Gastrocnemius medialis (tissue), 4 donors: ENCODE measurements at regions of chr12 and their contacts with region 1.

Region 1: GRCh38 chr12:121626087-121626852 is at the start of gene ORAI1:
- DNase-seq: peak; percentile 94 to 96
- ATAC-seq: peak; percentile 83 to 85
- H3K4me3 ChIP-seq: peak within 1 kb of the TSS; percentile 72 to 86 (median 80)
- H3K27ac ChIP-seq: peak within 1 kb of the TSS; percentile 93 to 96 (median 96)
- H3K4me1 ChIP-seq: peaks cover 41 to 52% of the 10 kb centered on the region in 2 donors
- H3K27me3 ChIP-seq: no peaks in the 10 kb centered on the region
- CTCF ChIP-seq: peak in 4 of 5 experiments; percentile 34 to 49 (median 43)
- POLR2A ChIP-seq: peak; percentile 97
- total RNA-seq, gene ORAI1: 9.9 to 29.0 (median 16.4) TPM

Region 2: DNA sequence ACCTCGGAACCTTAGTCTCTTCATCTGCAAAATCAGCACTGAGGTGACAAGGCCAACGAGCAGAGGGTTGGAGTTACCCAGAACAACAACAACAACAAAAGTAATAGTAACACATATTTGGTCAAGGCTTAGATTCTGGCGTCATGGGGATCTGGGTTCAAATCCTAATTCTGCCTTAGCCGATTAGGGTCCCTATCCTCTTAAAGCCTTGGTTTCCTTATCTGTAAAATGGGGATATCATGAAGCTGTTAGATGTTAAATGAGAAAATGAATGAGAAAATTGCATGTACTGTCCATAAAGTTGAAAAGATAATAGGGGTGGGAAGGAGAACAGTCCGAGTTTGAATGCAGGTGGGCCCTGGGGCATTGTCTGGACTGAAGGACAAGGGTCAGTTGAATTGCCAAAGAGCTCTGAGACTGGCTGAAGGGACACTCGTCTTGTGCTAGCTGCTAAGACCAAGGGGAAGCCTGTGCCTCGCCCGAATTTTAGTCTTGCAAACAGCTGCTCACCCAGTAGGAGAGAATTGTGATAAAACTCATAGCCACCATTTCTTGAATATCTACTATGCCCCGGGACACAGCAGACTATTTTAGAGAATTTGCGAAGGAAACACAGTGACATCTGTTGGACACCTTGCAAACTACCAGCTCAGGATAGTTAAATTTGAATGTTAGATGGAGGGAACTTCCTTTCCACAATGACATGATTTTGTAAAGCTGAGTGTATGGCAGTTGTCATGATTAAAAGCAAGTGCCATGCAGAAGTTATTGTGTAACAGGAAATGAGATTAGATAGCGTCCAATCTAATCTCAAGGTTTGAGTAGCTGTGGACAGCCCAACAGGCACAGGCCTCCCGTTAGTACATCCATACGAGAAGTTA is 654.7 kb before region 1 on chr12:
- in situ Hi-C with region 1: no loop called
- intact Hi-C with region 1: no loop called
- DNase-seq: no peak
- ATAC-seq: peak; percentile 68 to 95
- H3K4me3 ChIP-seq: no peak overlapping the region
- H3K27ac ChIP-seq: no peak overlapping the region
- H3K4me1 ChIP-seq: no peaks in the 10 kb centered on the region
- H3K27me3 ChIP-seq: no peaks in the 10 kb centered on the region
- CTCF ChIP-seq: peak; percentile 65 to 75 (median 68)
- POLR2A ChIP-seq: no peak

Region 3: DNA sequence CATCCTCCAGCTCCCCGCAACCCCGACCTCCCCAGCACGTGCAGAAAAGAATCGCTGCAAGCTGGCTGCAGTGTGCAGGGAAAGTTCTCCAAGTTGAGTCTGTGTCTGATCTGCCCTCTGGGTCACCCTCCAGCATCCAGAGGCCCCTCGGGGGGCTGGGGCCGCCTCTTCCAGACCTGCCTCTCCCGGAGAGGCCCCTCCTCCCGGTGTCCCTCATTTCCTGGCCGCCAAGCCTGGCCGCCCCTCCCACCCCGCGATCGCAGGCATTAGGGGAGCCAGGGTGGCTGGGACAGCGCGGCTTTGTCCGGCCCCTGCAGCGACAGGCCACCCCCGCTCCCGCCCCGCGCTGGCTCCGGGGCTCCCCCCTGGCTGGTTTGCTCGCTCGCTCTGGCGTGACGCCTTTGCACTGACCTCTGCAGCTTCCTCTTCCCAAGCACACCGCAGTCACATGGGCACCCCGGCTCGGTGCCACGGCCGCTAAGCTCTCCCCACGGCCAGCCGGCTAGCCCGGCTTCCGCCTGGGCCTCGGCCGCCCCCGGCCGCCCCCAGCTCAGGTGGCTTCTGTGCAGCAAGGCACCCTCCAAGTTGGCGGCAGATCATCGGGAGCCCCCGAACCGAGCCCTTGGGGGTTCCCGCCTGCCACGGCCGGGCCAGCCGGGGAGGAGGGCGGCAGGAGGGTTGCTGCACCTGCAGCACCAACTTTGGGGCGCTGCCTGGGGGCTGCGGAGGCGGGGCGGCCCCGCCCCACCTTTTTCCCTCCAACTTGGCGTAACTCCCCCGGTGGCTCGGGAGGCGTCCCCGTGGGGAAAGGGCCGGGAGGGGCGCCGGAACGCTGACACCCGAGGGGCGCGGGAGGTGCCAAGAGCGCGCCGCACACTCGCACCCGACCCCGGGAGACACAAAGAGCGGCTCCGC is 89.1 kb before region 1 on chr12:
- in situ Hi-C with region 1: no loop called
- intact Hi-C with region 1: loop called (anchors 5 kb)
- DNase-seq: peak; percentile 81 to 91
- ATAC-seq: peak; percentile 81
- H3K4me3 ChIP-seq: peak overlapping the region; percentile 68 to 87 (median 82)
- H3K27ac ChIP-seq: peak overlapping the region; percentile 91 to 97 (median 94)
- H3K4me1 ChIP-seq: peaks cover 22 to 23% of the 10 kb centered on the region in 2 donors
- H3K27me3 ChIP-seq: no peaks in the 10 kb centered on the region
- CTCF ChIP-seq: no peak
- POLR2A ChIP-seq: peak; percentile 59 to 75

Region 4: DNA sequence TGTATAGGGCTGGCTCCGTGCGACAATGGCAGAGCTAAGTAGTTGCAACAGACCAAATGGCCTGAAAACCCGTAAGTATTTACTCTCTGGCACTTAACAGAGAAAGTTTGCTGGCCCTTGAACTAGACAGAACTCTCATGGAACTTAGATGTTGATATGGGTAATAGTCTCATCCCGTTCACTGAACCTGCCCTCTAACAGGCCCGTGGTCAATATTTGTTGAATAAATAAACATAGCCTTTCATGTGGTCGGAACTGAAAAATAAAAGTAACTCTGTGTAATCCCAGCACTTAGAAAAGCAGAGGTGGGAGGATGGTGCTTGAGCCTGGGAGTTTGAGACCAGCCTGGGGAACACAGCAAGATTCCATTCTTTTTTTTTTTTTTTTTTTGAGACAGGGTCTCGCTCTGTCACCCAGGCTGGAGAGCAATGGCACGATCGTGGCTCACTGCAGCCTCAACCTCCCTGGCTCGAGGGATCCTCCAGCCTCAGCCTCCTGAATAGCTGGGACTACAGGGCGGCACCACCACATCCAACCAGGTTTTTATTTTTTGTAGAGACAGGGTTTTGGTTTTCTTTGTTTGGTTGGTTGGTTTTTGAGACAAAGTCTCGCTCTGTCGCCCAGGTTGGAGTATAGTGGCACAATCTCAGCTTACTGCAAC is 75.2 kb before region 1 on chr12:
- in situ Hi-C with region 1: loop called in 1 of 4 experiments (anchors 10 kb)
- intact Hi-C with region 1: loop called (anchors 1 kb)
- DNase-seq: no peak
- ATAC-seq: no peak
- H3K4me3 ChIP-seq: no peak overlapping the region
- H3K27ac ChIP-seq: no peak overlapping the region
- H3K4me1 ChIP-seq: peaks cover 3 to 4% of the 10 kb centered on the region in 2 donors
- H3K27me3 ChIP-seq: no peaks in the 10 kb centered on the region
- CTCF ChIP-seq: no peak
- POLR2A ChIP-seq: no peak

Region 5: DNA sequence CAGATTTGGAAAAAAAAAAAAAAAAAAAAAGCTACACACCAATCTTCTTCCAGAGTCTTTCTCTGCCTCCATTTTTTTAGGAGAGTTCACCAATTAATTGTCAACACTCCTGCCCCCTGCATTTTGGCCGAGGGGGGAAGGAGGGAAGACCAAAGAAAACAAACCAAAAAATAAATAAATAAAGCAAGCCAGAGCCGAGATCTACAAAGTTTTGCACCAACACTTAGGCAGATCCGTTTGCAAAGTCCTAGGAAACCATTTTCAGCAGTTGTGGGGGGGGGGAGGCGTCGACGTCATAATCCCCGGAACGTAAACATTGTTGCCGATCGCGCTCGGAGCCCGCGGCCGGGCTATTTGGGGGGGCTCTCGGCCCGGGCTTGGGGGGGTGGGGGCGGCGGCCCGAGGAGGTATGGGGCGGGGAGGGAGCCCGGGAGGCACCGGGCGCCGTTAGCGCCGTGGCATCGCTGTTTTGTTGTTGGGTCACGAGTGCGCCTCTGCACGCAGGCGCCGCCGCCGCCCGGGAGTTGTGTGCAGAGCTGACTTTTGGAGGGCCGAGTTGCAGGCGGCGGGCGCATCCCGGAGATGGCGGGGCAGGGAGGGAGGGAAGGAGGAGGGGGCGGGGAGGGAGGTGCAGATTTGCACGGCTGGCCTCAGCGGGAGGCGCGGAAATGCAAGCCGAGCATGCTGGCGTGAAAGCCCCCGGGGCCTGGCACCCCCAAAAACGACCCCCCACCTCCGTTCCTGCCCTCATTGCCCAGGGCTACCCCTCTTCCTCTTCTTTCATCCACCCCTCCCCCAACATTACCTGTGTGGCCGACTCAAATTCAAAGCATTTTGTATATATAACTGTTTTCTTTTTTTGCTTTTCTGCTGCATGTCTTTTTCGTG is 46.0 kb before region 1 on chr12:
- in situ Hi-C with region 1: loop called in 1 of 4 experiments (anchors 10 kb)
- intact Hi-C with region 1: loop called (anchors 1 kb)
- DNase-seq: peak; percentile 59 to 66
- ATAC-seq: peak; percentile 48 to 49
- H3K4me3 ChIP-seq: peak overlapping the region; percentile 76 to 83 (median 78)
- H3K27ac ChIP-seq: peak overlapping the region; percentile 91 to 96 (median 94)
- H3K4me1 ChIP-seq: peaks cover 23 to 24% of the 10 kb centered on the region in 2 donors
- H3K27me3 ChIP-seq: no peaks in the 10 kb centered on the region
- CTCF ChIP-seq: no peak
- POLR2A ChIP-seq: no peak

Region 6: DNA sequence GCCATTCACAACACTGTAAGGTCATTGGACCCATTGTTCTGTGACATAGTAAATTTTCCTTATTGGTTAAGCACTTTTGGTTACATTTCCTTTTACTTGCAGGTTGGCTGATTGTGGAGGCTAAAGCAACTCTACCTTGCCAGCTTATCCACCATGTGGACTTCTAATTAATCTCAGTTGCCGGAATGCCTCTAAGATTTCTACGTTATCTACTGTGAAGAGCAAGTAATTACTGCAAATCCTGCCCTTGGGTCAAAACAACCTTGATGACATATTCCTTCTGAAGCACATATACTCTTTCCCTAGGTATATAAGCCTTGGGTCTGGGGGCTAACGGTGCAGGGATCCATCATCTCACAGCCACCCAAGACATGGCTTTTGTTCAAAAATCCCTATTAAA is 62.7 kb after region 1 on chr12:
- in situ Hi-C with region 1: loop called in 1 of 4 experiments (anchors 5 kb)
- intact Hi-C with region 1: loop called (anchors 2 kb)
- DNase-seq: no peak
- ATAC-seq: no peak
- H3K4me3 ChIP-seq: no peak overlapping the region
- H3K27ac ChIP-seq: no peak overlapping the region
- H3K4me1 ChIP-seq: peaks cover 4 to 5% of the 10 kb centered on the region in 2 donors
- H3K27me3 ChIP-seq: no peaks in the 10 kb centered on the region
- CTCF ChIP-seq: no peak
- POLR2A ChIP-seq: no peak